ENCODE measurements at regions of chr7 and their contacts with region 1.

Region 1: GRCh38 chr7:75565132-75565837 is 73.2 kb downstream of the SPDYE5 start:
- DNase-seq: peak; percentile 96
- H3K4me3 ChIP-seq: no peak overlapping the region
- H3K27ac ChIP-seq: peak overlapping the region; percentile 91
- H3K4me1 ChIP-seq: peaks cover 20% of the 10 kb centered on the region
- H3K27me3 ChIP-seq: no peaks in the 10 kb centered on the region
- CTCF ChIP-seq: no peak
- POLR2A ChIP-seq: peak; percentile 44

Region 2: GRCh38 chr7:75599244-75599781 is 34.0 kb after region 1 on chr7:
- CTCF ChIA-PET with region 1: interaction called, 5 read pairs
- POLR2A ChIA-PET with region 1: no interaction called
- dilution Hi-C with region 1: no loop called
- intact Hi-C with region 1: loop called (anchors 1 kb)
- DNase-seq: peak; percentile 85
- H3K4me3 ChIP-seq: no peak overlapping the region
- H3K27ac ChIP-seq: peak overlapping the region; percentile 74
- H3K4me1 ChIP-seq: peaks cover 30% of the 10 kb centered on the region
- H3K27me3 ChIP-seq: no peaks in the 10 kb centered on the region
- CTCF ChIP-seq: peak in 1 of 2 donors; percentile 2
- POLR2A ChIP-seq: no peak

Region 3: DNA sequence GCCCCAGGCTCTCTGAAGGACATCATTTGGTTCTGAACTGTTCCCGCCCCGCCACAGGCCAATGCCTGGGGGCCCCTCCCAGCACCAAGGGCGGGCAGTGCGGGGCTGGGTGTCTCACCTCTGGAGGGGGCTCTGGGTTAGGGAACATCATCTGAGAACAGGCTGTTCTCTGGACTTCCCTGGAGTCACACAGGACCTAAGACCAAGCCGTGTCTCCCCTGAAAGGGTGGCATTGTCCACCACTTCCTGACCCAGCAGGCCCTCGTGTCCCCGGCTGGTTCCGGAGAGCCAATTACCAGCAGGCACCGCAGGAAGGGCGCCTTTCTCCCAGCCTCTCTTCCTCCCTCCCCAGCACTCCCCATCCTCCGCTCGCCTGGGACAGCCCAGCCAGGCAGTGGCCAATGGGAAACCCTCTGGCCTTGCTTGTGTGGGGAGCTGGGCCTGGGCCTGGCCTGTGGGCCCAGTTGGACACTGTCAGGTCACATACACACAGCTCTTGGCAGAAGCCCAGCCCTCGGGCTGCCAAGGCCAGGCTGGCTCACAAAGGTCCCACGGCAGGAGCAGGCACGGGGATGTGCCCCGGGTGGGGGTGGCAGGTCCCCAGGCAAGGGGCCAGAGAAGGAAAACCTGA is 46.4 kb after region 1 on chr7:
- CTCF ChIA-PET with region 1: no interaction called
- POLR2A ChIA-PET with region 1: no interaction called
- dilution Hi-C with region 1: no loop called
- intact Hi-C with region 1: loop called (anchors 5 kb)
- DNase-seq: peak; percentile 82
- H3K4me3 ChIP-seq: no peak overlapping the region
- H3K27ac ChIP-seq: peak overlapping the region; percentile 43
- H3K4me1 ChIP-seq: peaks cover 8% of the 10 kb centered on the region
- H3K27me3 ChIP-seq: no peaks in the 10 kb centered on the region
- CTCF ChIP-seq: no peak
- POLR2A ChIP-seq: peak; percentile 22

Region 4: DNA sequence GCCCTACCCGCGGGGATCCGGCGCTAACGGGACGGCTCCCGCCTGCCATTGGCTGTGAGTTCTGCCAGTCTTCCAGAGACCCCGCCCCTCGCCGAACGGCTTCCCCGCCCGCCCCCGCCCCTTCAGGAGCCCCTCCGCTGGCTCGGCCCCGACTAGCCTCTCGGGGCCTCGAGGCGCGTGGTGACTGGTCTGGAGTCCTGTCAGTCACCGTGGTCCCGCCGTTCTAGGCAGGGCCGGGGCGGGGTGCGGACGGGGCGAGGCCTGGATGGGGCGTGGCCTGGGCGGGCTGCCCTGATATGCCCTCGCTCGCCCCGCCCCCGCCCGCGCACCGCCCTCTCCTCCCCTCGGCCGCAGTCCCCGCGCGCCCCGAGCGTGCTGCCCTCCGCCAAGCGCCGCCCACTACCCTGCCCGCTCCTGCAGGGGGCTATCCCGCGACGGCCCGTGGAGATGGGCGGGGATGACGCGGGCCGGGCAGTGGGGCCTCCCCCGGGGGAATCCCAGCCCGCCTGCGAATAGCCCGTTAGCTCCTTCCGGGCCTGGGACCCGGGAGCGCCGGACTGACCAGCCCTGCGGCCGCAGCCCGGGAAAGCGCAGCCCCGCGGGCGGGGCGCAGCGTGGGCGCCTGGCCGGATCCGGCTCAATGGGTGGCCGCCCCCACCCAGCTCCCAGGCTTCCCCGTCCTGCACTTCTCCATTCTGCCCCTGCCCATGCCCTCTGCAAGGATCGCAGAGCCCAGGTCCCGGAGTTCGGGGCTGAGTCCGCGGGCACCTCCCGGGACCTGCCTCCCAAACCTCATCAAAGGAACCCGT is 173.9 kb after region 1 on chr7:
- CTCF ChIA-PET with region 1: no interaction called
- POLR2A ChIA-PET with region 1: no interaction called
- dilution Hi-C with region 1: no loop called
- intact Hi-C with region 1: loop called (anchors 1 kb)
- DNase-seq: peak; percentile 97
- H3K4me3 ChIP-seq: peak overlapping the region; percentile 54 to 99 (median 91)
- H3K27ac ChIP-seq: peak overlapping the region; percentile 55
- H3K4me1 ChIP-seq: peaks cover 6% of the 10 kb centered on the region
- H3K27me3 ChIP-seq: no peaks in the 10 kb centered on the region
- CTCF ChIP-seq: no peak
- POLR2A ChIP-seq: no peak

Region 5: DNA sequence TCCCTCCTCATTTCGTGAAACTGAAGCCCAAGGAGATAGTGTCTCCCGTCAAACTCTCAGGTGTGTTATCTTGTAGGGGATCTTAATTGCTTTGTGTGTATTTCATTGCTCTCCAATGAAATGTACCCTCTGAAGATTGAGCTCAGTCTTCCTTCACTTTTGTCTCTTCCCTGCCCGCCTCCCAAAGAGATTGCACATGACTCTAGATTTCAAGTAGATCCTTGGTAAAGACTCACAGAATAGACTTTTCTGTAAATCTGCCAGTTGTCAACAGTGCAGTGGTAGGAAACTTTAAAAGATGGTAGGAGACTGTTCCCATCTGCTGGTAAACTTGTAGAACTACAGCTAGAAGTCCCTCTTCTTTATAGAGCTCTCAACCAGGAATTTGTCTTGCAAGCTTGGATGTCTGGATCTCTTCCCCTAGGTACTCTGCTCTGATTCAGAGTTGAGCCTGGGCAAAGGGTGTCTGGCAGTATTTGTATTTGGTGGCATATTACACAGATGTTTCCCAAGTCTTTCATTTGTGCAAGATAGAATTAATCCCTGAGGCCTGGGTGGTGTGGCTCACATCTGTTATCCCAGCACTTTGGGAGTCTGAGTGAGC is 197.1 kb after region 1 on chr7:
- CTCF ChIA-PET with region 1: interaction called, 11 read pairs
- POLR2A ChIA-PET with region 1: no interaction called
- dilution Hi-C with region 1: no loop called
- intact Hi-C with region 1: no loop called
- DNase-seq: peak; percentile 58
- H3K4me3 ChIP-seq: no peak overlapping the region
- H3K27ac ChIP-seq: no peak overlapping the region
- H3K4me1 ChIP-seq: no peaks in the 10 kb centered on the region
- H3K27me3 ChIP-seq: no peaks in the 10 kb centered on the region
- CTCF ChIP-seq: peak; percentile 58 to 60
- POLR2A ChIP-seq: no peak